Left ventricle myocardium superior (tissue), 1 donor: ENCODE measurements at regions of chr1 and their contacts with region 1.

Region 1: GRCh38 chr1:41919764-41920397 is 1.2 kb upstream of the HIVEP3 start:
- DNase-seq: peak; percentile 75
- ATAC-seq: peak; percentile 73

Region 2: DNA sequence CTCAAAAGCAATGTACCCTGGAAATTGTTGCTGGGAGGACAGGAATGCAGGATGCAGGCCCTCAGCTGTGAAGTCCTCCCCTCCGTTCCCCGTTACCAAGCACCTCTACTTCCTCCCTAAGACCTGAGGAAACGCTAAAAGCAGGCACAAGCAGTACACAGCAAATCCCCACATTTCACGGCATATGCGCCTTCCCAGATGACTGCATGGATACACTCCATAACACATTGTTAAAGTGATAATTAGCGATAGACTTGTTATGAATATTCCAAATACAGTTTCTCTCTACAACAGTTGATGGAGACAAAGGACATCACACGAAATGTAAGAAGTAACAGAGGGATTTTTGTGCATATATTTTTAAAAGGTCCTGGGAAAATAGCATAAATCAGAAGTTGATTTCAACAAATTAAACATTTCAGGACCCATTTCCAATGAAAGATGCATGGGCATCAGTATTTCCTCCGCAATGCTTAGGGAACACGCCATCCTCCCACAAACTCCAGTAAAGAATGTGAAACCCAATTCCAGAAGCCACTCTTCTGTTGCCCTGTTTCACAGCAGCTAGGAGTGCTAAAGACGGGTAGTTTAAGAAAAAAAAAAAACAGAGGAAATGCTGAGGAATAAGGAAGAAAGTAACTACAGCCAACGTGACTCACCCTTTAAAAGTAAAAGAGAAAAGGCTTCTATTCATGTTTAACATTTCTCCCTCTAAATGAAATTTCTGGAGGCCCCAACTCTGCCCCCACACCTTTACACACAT is 76.7 kb before region 1 on chr1:
- intact Hi-C with region 1: no loop called
- DNase-seq: no peak
- ATAC-seq: no peak

Region 3: DNA sequence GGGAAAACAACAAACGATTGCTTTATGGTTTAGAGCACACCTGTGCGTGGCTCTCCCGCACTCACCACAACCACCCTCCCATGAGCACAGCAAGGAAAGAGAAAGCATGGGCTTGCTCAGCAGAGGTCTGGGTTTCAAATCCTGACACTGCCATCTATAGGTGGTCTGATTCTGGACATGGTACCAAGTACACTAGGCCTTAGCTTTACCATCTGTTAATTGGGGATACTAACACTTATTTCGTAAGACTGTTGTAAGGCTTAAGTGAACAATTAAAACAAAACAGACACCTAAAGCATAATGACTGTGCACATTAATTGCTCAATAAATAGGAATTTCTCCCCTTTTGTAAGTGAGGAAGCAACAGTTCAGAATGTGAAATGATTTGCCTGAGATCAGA is 51.3 kb before region 1 on chr1:
- intact Hi-C with region 1: loop called (anchors 10 kb)
- DNase-seq: no peak
- ATAC-seq: no peak